Adrenal gland (tissue), 19 donors: ENCODE measurements at regions of chr6 and their contacts with region 1.

Region 1: GRCh38 chr6:4433199-4433598 is 297.8 kb upstream of the ECI2 start:
- DNase-seq: no peak
- H3K4me3 ChIP-seq: no peak overlapping the region
- H3K27ac ChIP-seq: no peak overlapping the region
- H3K4me1 ChIP-seq: no peaks in the 10 kb centered on the region
- H3K27me3 ChIP-seq: no peaks in the 10 kb centered on the region
- CTCF ChIP-seq: no peak
- POLR2A ChIP-seq: no peak

Region 2: DNA sequence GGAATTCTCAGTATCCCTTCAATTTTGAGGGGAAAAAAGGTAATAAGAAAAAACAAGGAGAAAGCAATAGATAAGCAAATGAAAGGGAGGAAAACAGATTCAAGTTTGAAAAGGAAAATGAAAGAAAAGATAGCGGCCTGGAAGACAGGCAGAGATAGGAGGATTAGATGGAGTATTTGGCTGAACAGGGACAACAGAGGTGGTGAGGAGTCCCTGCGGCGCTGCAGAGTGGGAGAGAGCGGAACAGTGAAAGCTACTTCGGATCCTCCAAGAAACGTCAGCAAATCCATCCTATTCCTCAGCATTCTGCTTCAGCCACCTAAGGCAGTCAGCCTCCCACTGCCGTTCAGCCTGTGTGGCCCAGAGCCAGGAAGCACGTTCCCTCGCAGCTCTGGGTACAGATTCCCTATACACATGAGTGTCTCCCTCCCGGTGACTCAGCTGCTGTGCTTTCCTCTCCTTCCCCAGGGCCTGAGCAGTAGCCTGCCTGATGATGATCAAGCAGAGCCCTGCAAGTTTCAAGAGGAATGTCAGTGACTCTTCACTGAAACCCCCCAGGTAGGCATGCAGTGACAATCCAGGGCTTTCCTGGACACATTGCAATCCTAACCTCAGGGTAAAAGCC is 299.6 kb after region 1 on chr6:
- intact Hi-C with region 1: loop called in 1 of 2 experiments (anchors 5 kb)
- DNase-seq: peak; percentile 59 to 82 (median 79)
- H3K4me3 ChIP-seq: peak overlapping the region in 2 of 4 donors; percentile 9 to 12
- H3K27ac ChIP-seq: no peak overlapping the region
- H3K4me1 ChIP-seq: peaks cover 0 to 4% of the 10 kb centered on the region in 2 donors
- H3K27me3 ChIP-seq: no peaks in the 10 kb centered on the region
- CTCF ChIP-seq: no peak
- POLR2A ChIP-seq: no peak